Activated T-helper 1 cell treated with anti-CD3 and anti-CD28 coated beads, Interleukin-12 subunit alpha, Interleukin-12 subunit beta, Interleukin-2, Interleukin-4 antibody, amounts not matched to agents 30 ng/mL and 10 ng/mL and 1 ng/mL, durations not matched to agents 14 hours and 24 hours and 36 hours (primary cell): ENCODE measurements at regions of chr9 and their contacts with region 1.

Region 1: GRCh38 chr9:89400403-89401116 is 82.3 kb downstream of the SECISBP2 start:
- DNase-seq: no peak
- H3K4me3 Mint-ChIP-seq: no peak overlapping the region
- H3K27ac Mint-ChIP-seq: peak overlapping the region; percentile 73
- H3K4me1 Mint-ChIP-seq: peaks cover 21% of the 10 kb centered on the region
- H3K27me3 Mint-ChIP-seq: no peaks in the 10 kb centered on the region

Region 2: GRCh38 chr9:89334151-89334550 is 66.4 kb before region 1 on chr9:
- intact Hi-C with region 1: loop called (anchors 5 kb)
- DNase-seq: no peak
- H3K4me3 Mint-ChIP-seq: no peak overlapping the region
- H3K27ac Mint-ChIP-seq: no peak overlapping the region
- H3K4me1 Mint-ChIP-seq: peaks cover 5% of the 10 kb centered on the region
- H3K27me3 Mint-ChIP-seq: no peaks in the 10 kb centered on the region

Region 3: DNA sequence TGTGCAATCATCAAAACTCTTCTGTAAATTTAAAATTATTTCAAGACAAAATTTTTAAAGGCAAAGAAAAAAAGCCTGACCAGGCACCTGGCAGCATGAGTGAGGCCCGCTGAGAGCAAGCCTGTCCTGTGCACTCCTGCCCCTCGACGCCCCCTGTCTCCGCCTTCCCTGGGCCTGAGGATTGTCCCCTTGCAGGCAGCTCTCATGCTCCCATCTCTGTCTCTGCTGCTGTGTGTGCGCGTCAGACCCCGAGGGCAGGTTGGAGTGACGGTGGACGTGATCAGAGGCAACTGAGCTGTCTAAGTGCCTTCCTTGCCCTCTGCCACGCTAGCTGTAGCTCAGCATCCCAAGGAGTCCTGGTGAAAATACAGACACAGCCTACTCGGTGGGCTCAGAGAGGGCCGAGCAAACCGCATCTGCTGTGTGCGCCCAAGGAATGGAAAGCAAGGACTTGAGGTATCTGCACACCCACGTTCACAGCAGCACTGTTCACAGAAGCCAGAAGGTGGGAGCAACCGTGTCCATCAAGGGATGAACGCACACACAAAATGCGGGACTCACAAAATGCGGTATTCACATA is 16.7 kb before region 1 on chr9:
- intact Hi-C with region 1: loop called (anchors 2 kb)
- DNase-seq: no peak
- H3K4me3 Mint-ChIP-seq: no peak overlapping the region
- H3K27ac Mint-ChIP-seq: peak overlapping the region; percentile 40
- H3K4me1 Mint-ChIP-seq: peaks cover 42% of the 10 kb centered on the region
- H3K27me3 Mint-ChIP-seq: peaks cover 2% of the 10 kb centered on the region